A673 (cell line): ENCODE measurements at regions of chr4 and their contacts with region 1.

Region 1: DNA sequence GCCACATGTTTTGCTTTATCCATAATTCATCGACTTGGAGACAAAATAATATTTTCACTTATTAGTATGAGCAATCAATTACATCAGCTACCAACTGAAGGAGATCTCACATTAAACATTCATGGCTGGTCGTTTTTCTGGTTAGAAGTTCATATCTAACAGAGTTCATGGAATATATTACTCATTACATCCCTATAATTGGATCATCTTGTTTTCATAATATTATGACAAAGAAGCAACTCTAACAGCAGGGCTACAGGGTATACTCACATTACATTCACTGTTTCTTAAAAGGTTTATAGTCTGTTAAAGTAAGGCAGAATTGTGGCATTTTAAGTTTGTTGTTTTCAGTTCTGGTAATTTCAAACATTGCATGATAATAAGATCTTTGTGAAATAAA is 33.0 kb downstream of the GSTCD start:
- DNase-seq: peak; percentile 17
- H3K4me3 ChIP-seq: no peak overlapping the region
- H3K27ac ChIP-seq: no peak overlapping the region
- H3K4me1 ChIP-seq: peaks cover 5% of the 10 kb centered on the region
- H3K27me3 ChIP-seq: no peaks in the 10 kb centered on the region
- CTCF ChIP-seq: no peak

Region 2: GRCh38 chr4:105751718-105752299 is 10.3 kb after region 1 on chr4:
- CTCF ChIA-PET with region 1: no interaction called
- POLR2A ChIA-PET with region 1: interaction called, 22 read pairs
- intact Hi-C with region 1: no loop called
- DNase-seq: no peak
- H3K4me3 ChIP-seq: no peak overlapping the region
- H3K27ac ChIP-seq: no peak overlapping the region
- H3K4me1 ChIP-seq: no peaks in the 10 kb centered on the region
- H3K27me3 ChIP-seq: no peaks in the 10 kb centered on the region
- CTCF ChIP-seq: no peak

Region 3: GRCh38 chr4:105895583-105896460 is 154.3 kb after region 1 on chr4:
- CTCF ChIA-PET with region 1: no interaction called
- POLR2A ChIA-PET with region 1: no interaction called
- intact Hi-C with region 1: no loop called
- DNase-seq: peak; percentile 21
- H3K4me3 ChIP-seq: peak overlapping the region; percentile 48
- H3K27ac ChIP-seq: no peak overlapping the region
- H3K4me1 ChIP-seq: peaks cover 12% of the 10 kb centered on the region
- H3K27me3 ChIP-seq: peaks cover 99% of the 10 kb centered on the region
- CTCF ChIP-seq: no peak

Region 4: DNA sequence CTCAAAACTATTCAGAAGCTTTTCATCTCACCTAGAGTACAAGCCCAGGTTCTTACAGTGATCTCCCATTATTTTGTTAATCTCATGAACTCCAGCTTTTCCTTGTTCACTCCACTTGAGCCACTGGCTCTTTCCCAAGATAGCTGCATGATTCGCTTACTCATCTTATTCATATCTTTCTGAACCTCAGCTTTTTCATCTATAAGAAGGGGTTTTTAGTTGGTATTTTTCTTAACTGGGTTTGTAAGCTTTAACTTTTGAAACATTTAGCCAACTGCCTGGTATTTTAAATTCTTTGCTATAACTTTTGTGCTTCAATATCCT is 603.1 kb after region 1 on chr4:
- CTCF ChIA-PET with region 1: no interaction called
- POLR2A ChIA-PET with region 1: no interaction called
- intact Hi-C with region 1: no loop called
- DNase-seq: peak; percentile 6
- H3K4me3 ChIP-seq: no peak overlapping the region
- H3K27ac ChIP-seq: no peak overlapping the region
- H3K4me1 ChIP-seq: peaks cover 12% of the 10 kb centered on the region
- H3K27me3 ChIP-seq: no peaks in the 10 kb centered on the region
- CTCF ChIP-seq: no peak